Astrocyte of the cerebellum (primary cell): ENCODE measurements at regions of chrX and their contacts with region 1.

Region 1: DNA sequence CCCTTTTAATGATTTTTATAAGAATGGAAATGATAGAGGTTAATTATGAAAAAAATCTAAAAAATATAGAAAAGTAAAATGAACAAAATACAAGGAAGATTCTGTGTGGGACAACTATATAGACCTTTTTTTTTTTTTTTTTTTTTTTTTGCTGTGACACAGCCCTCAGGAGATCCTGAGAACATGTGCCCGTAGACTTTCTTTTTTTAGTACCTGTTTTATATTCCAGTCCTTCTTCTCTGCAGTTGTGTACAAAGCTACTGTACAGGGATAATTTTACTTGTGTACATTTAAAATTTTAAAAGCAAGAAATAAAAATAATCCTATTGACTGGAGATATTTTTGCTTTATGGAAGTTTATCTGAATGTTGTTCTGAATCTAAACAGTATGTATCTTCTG is 85.5 kb downstream of the KDM6A start:
- DNase-seq: no peak
- H3K4me3 ChIP-seq: no peak overlapping the region
- CTCF ChIP-seq: no peak

Region 2: GRCh38 chrX:45007598-45007997 is 49.1 kb after region 1 on chrX:
- in situ Hi-C with region 1: loop called (anchors 5 kb)
- DNase-seq: no peak
- H3K4me3 ChIP-seq: no peak overlapping the region
- CTCF ChIP-seq: no peak